ENCODE measurements at regions of chr17 and their contacts with region 1.

Region 1: DNA sequence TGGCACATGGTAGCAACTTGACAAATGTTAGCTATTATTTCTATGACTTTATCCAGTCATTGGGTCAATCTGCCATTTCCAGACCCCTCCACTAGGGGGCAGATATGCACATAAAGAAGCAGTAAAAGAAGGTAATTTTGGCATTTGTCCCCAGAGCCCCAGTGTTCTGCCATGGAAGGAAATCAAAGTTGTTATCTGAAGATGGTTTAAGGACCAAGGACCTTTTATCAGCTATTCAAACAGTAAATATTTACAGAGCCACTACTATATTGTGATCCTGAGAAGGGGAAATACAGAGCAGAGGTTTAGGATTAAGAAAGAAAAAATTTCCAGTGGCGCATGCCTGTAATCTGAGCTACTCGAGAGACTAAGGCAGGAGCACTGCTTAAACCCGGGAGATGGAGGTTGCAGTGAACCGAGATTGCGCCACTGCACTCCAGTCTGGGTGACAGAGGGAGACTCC is 20.0 kb downstream of the TRAF4 start:
- DNase-seq: peak; percentile 40

Region 2: DNA sequence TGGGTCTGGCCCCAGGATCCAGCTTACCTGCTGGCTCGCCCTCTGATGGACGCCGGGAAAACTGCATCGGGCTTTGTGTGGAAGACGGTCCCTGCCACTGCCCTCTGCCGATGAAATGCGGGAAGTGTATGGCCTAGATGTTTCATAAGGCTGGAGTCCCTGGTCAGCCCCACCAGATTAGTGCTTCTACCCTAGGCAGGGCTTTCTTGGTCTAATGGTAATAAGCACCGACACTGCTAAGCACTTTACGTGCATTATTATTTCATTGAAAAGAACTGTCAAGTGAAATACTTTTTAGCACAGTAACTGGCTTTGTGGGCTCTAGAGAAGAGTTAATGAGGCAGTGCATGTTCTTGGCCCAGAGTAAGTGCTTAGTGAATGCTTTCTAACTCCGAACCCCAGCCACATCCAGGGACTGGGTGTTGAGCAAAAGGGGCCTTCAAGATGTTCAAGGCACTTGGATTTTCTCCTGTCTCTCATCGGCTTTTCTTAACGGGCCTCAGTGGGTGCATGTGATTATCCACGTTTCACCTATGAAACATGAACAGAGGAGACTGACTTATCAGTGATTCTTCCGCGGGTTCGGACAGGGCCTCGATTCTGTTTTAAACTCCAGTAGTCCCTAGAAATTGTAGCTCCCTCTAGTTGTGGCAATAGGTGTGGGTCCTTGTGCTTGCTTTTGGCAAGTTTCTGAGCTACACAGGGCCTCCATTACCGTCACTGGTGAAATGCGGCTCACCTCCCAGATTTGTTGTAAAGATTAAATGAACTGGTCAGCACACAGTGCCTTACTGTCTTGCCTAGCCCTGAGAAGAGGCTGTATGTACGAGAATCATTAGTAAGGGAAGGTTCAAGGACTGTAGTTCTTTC is 13.4 kb before region 1 on chr17:
- CTCF ChIA-PET with region 1: interaction called, 15 read pairs
- POLR2A ChIA-PET with region 1: interaction called, 5 read pairs
- DNase-seq: peak; percentile 70

Region 3: GRCh38 chr17:28812091-28812747 is 48.4 kb after region 1 on chr17:
- CTCF ChIA-PET with region 1: interaction called, 14 read pairs
- POLR2A ChIA-PET with region 1: no interaction called
- DNase-seq: peak; percentile 92

Region 4: GRCh38 chr17:28896884-28897768 is 133.3 kb after region 1 on chr17 and contains the start of gene FLOT2:
- CTCF ChIA-PET with region 1: interaction called, 13 read pairs
- POLR2A ChIA-PET with region 1: interaction called, 6 read pairs
- DNase-seq: peak; percentile 55

Measured in HEK293T (cell line).